ENCODE measurements at regions of chr9 and their contacts with region 1.

Region 1: DNA sequence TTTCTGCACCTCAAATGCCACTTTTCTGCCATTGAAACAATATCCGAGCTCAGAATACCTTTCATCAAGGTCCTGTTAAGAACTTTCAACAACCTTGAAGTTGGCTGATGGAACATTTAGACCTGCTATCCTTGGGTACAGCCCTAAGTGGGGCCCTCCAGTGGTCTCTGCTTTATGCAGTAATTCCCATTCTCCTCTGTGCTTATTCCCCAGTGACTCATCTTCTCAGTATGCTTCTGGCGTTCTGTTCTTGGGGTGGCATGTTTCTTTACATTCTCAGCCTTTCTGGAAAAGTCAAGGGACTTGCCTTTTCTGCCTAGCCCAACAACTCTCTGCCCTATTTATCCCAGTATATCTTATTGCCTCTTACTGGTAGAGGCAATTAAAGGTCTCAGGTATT is 7.1 kb downstream of the ANP32B start:
- DNase-seq: no peak

Region 2: DNA sequence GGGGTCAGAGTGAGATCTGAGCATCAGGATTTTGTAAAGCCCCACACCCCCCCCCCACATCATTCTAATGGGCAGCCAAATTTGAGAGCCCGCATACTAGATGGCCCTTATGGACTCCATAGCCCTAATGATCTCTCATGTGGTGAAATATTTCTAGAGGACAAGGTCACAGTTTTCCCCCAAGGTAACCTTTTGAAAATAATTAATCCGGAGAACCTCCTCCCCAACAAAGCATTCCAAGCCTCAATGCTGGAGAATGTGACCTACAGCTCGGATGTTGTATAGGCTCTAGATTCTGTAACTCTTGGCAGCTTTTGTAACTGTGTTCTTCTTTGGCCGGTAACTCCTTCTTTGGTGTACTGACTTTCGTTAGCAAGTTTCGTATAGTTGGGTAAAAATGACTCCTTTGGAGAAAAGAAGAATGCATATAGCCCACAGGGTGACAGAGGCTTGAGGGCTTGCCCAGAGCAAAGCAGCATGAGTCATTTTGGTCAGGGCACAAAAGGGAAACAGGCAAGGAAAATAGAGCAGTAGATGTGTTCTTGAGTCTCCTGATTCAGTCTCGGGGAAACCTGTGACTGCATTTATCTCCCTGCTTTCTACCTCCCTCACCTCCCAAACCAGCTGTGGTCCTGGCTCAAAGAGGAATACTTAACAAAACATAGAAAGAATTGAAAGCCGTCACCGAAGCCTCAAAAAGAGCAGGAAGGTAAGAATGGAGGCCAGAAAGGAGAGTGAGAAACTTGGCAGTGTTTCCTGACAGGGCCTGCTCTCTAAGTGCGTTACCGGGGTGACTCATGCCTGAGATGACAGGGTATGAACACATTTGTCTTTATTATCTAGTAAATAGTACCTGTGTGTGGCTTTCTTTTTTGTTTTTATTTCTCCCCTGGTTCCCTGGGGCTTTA is 286.6 kb before region 1 on chr9:
- intact Hi-C with region 1: loop called (anchors 10 kb)
- DNase-seq: no peak

Region 3: GRCh38 chr9:97895695-97896332 is 94.5 kb before region 1 on chr9:
- intact Hi-C with region 1: no loop called
- DNase-seq: no peak

Region 4: GRCh38 chr9:98326459-98327248 is 336.4 kb after region 1 on chr9:
- intact Hi-C with region 1: no loop called
- DNase-seq: no peak

Measured in posterior cingulate gyrus (tissue), 11 donors.